ENCODE measurements at regions of chr17 and their contacts with region 1.

Region 1: DNA sequence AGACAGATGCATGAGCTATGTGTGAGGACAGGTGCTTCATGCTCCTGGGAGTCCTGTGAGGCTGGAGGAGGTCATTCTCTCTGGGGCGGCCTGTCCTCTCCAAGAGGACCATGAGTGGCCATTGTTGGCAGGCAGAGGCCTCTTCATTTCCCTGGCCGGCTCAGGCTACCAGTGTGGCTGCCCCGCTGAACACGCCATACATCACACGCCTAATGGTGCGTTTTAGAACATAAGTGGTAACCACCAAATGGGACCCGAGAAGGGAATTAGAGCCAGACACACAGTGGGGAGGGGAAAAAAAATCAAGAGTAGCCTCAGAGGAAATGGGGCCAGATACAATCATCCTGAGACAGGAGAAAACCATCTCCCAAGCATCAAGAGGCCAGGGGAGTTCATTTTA is 140.0 kb downstream of the SPACA3 start:
- DNase-seq: no peak
- ATAC-seq: no peak
- H3K4me3 ChIP-seq: no peak overlapping the region
- H3K27ac ChIP-seq: no peak overlapping the region
- H3K4me1 ChIP-seq: no peaks in the 10 kb centered on the region
- H3K27me3 ChIP-seq: no peaks in the 10 kb centered on the region
- CTCF ChIP-seq: no peak

Region 2: DNA sequence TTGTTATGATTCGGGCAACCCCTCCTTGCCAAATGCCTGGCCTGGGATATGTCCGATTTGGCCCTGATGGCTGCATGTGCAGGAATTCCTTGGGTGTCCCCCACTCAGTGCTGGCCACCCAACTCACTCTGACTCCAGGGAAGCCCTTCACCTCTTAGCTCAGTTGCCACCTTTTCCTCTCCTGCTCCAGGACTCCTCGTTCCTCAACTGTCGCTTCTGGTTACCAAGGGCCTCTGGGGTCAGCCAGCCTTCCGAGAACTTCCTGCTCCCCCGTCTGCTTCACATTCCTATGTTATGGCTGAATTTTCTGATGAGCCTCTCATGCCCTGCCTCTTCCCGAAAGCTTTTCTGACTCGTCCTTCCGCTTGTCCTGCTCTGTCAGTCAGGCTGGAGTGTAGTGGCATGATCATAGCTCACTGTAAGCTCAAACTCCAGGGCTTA is 76.4 kb before region 1 on chr17:
- intact Hi-C with region 1: no loop called
- DNase-seq: no peak
- ATAC-seq: no peak
- H3K4me3 ChIP-seq: no peak overlapping the region
- H3K27ac ChIP-seq: no peak overlapping the region
- H3K4me1 ChIP-seq: no peaks in the 10 kb centered on the region
- H3K27me3 ChIP-seq: no peaks in the 10 kb centered on the region
- CTCF ChIP-seq: no peak

Region 3: DNA sequence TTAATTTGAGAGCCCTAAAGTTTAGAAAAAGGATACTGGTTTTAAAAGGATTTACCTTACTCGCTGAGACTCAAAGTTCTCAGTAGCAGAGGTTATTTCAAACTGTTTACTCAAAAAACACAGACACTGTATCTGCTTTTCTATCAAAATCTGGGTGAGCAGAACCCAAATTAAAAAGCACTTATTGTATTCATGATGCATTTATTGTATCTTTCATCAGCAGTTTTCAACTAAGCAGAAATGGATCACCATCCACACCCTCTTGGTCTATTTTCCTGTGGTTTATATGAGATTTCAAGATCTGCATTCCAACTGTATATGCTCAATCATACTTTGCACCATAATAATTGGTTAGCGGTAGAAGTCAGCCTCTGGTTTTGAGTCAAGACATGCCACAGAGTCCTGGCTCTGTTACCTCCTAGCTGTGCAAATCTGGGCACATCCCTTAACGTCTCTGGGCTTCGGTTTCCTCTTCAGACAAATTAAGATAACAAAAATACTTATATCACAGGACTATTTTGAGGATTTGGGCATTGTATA is 51.9 kb after region 1 on chr17:
- intact Hi-C with region 1: loop called in 1 of 3 experiments (anchors 5 kb)
- DNase-seq: no peak
- ATAC-seq: no peak
- H3K4me3 ChIP-seq: no peak overlapping the region
- H3K27ac ChIP-seq: no peak overlapping the region
- H3K4me1 ChIP-seq: no peaks in the 10 kb centered on the region
- H3K27me3 ChIP-seq: no peaks in the 10 kb centered on the region
- CTCF ChIP-seq: no peak

Region 4: GRCh38 chr17:33233811-33234177 is 102.2 kb after region 1 on chr17:
- intact Hi-C with region 1: no loop called
- DNase-seq: peak in 1 of 6 donors; percentile 13
- ATAC-seq: peak; percentile 19 to 53 (median 47)
- H3K4me3 ChIP-seq: no peak overlapping the region
- H3K27ac ChIP-seq: no peak overlapping the region
- H3K4me1 ChIP-seq: peaks cover 0 to 16% (median 0%) of the 10 kb centered on the region in 3 donors
- H3K27me3 ChIP-seq: no peaks in the 10 kb centered on the region
- CTCF ChIP-seq: no peak